ENCODE measurements at regions of chr1 and their contacts with region 1.

Region 1: DNA sequence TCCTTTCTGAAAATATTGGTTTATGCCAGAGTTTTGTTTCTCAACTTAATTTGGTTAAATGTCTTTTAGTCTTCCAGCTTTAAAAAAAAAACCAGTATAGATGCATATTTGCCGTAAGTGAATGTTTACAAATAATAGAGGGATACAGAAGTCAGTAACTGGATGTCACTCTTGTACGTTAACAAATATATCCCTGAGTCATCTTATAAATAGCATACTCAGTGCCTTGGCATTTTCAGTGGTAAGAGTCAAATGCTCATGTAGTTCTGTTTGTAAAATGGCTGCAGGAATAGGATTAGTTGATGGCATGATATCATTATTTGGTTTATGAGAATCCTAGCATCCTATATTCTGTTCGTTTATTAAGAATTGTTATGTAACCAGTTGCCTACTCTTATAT is 55.4 kb downstream of the SPEN start:
- DNase-seq: no peak
- H3K4me3 Mint-ChIP-seq: no peak overlapping the region
- H3K27ac Mint-ChIP-seq: no peak overlapping the region
- H3K4me1 Mint-ChIP-seq: peaks cover 7% of the 10 kb centered on the region
- H3K27me3 Mint-ChIP-seq: no peaks in the 10 kb centered on the region
- CTCF ChIP-seq: no peak

Region 2: DNA sequence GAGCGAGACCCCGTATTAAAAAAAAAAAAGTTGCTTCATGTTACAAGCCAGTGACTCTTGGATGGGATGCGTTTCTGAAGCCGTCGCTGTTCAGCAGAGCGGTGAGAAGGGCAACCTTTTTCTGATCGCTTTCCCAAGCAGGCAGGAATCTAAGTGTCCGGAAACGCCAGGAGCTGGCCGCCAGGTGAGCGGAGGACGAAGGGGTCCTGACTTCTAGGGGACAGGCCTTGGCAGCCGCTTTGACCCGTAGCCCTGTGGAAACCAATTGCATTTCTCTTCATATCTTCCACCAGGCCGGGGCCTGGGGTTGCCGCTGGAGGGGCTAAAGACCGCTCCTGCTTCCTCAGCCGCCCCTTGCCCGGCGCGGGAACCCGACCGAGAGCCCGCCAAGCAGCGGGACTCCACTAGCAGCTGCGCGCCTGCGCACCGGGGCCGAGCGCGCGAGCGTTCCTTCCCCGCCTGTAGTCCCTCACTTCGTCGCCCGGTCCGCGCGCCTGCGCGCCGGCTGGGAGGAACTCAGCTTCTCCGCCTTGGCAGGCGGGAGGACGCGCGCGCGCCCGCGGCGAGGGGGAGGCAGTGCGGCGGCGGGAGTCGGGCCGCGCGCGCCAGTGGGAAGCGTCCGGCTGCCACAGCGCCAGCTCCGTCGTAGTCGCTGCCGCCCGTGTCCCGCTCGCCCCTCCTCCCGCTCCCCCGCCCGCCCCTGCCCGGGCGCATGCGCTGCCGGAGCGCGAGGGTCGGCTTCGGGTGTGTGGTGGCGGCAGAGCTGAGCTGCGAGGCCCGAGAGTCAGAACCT is 55.6 kb before region 1 on chr1 and contains the start of gene SPEN:
- CTCF ChIA-PET with region 1: interaction called, 5 read pairs
- intact Hi-C with region 1: loop called (anchors 5 kb)
- DNase-seq: peak; percentile 95
- H3K4me3 Mint-ChIP-seq: peak within 1 kb of the TSS; percentile 90
- H3K27ac Mint-ChIP-seq: peak within 1 kb of the TSS; percentile 87
- H3K4me1 Mint-ChIP-seq: no peaks in the 10 kb centered on the region
- H3K27me3 Mint-ChIP-seq: no peaks in the 10 kb centered on the region
- CTCF ChIP-seq: no peak
- total RNA-seq, gene SPEN: 48.3 and 53.6 TPM in 2 replicates

Measured in Calu3 (cell line).